Heart right ventricle (tissue), 16 donors: ENCODE measurements at regions of chr9 and their contacts with region 1.

Region 1: GRCh38 chr9:27829621-27830020 is 256.3 kb upstream of the C9orf72 start:
- DNase-seq: no peak
- ATAC-seq: no peak
- H3K4me3 ChIP-seq: no peak overlapping the region
- H3K27ac ChIP-seq: no peak overlapping the region
- H3K4me1 ChIP-seq: no peaks in the 10 kb centered on the region
- H3K27me3 ChIP-seq: no peaks in the 10 kb centered on the region
- CTCF ChIP-seq: no peak

Region 2: DNA sequence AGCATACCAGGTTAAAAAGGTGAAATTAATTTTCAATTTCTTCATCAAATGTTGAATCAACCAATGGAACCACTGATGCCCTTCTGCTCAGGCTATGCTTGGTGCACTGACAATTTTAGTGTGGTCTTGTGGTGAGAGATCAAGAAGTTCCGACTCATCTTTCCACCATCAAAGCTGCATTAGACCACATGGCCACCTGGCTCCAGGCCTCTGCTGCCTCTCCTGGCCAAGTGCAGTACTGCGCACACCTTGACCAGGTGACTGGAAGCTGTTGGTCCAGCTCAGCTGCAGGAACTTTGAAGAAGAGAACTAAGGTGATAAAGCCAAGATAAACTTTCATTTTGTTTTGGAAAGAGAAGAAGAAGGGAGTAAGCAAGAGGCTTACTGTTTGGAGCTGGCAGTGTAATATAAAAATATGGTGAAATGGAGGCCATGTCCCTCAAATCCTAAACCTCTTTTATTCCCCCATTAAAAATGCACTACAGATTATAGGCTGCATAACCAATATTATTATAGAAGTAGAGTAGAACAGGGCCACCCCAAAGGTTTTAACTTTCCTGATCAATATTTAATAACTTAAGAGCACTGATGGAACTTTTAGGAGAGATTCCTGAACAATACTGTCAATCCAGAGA is 59.2 kb after region 1 on chr9:
- intact Hi-C with region 1: loop called in 1 of 10 experiments (anchors 10 kb)
- DNase-seq: no peak
- ATAC-seq: no peak
- H3K4me3 ChIP-seq: no peak overlapping the region
- H3K27ac ChIP-seq: no peak overlapping the region
- H3K4me1 ChIP-seq: no peaks in the 10 kb centered on the region
- H3K27me3 ChIP-seq: no peaks in the 10 kb centered on the region
- CTCF ChIP-seq: peak in 7 of 9 donors; percentile 31 to 58 (median 40)